ENCODE measurements at regions of chr5 and their contacts with region 1.

Region 1: GRCh38 chr5:119355685-119356611 is at the start of gene TNFAIP8:
- DNase-seq: no peak
- ATAC-seq: peak; percentile 66
- H3K4me3 ChIP-seq: peak within 1 kb of the TSS; percentile 96
- H3K27ac ChIP-seq: peak within 1 kb of the TSS; percentile 92
- H3K4me1 ChIP-seq: peaks cover 40% of the 10 kb centered on the region
- H3K27me3 ChIP-seq: no peaks in the 10 kb centered on the region
- CTCF ChIP-seq: no peak
- EP300 ChIP-seq: peak in 1 of 2 experiments; percentile 61; a peak in 2 of 4 replicates
- POLR2A ChIP-seq: peak; percentile 74
- RAD21 ChIP-seq: peak; percentile 26; the same call in 1 of the 2 replicates
- polyA plus RNA-seq, gene TNFAIP8: 217 to 324 TPM

Region 2: GRCh38 chr5:119070828-119071572 is 284.9 kb before region 1 on chr5 and contains the start of gene DMXL1:
- CTCF ChIA-PET with region 1: no interaction called
- POLR2A ChIA-PET with region 1: interaction called, 5 read pairs
- RAD21 ChIA-PET with region 1: interaction called, 4 read pairs
- SMC1A ChIA-PET with region 1: interaction called, 4 read pairs
- in situ Hi-C with region 1: no loop called
- intact Hi-C with region 1: loop called (anchors 5 kb)
- DNase-seq: peak; percentile 99
- ATAC-seq: peak; percentile 84
- H3K4me3 ChIP-seq: peak within 1 kb of the TSS; percentile 79
- H3K27ac ChIP-seq: peak within 1 kb of the TSS; percentile 91
- H3K4me1 ChIP-seq: peaks cover 5% of the 10 kb centered on the region
- H3K27me3 ChIP-seq: no peaks in the 10 kb centered on the region
- CTCF ChIP-seq: no peak
- EP300 ChIP-seq: 0 out of 4 replicates have a peak, but pooled peaks of 1 of the 2 experiments have one; percentile 8
- POLR2A ChIP-seq: peak; percentile 91
- RAD21 ChIP-seq: no peak
- polyA plus RNA-seq, gene DMXL1: 9.1 to 11.0 TPM

Region 3: GRCh38 chr5:119290161-119290569 is 65.8 kb before region 1 on chr5:
- CTCF ChIA-PET with region 1: no interaction called
- POLR2A ChIA-PET with region 1: interaction called, 6 read pairs
- RAD21 ChIA-PET with region 1: interaction called, 12 read pairs
- SMC1A ChIA-PET with region 1: interaction called, 14 read pairs
- in situ Hi-C with region 1: no loop called
- intact Hi-C with region 1: no loop called
- DNase-seq: peak; percentile 66
- ATAC-seq: peak; percentile 90
- H3K4me3 ChIP-seq: peak overlapping the region; percentile 38
- H3K27ac ChIP-seq: peak overlapping the region; percentile 84
- H3K4me1 ChIP-seq: peaks cover 46% of the 10 kb centered on the region
- H3K27me3 ChIP-seq: no peaks in the 10 kb centered on the region
- CTCF ChIP-seq: no peak
- EP300 ChIP-seq: peak; percentile 69 to 79; a peak in 2 of 4 replicates
- POLR2A ChIP-seq: no peak
- RAD21 ChIP-seq: no peak

Region 4: GRCh38 chr5:119367502-119368237 is 11.7 kb after region 1 on chr5:
- CTCF ChIA-PET with region 1: interaction called, 33 read pairs
- POLR2A ChIA-PET with region 1: interaction called, 125 read pairs
- RAD21 ChIA-PET with region 1: interaction called, 77 read pairs
- SMC1A ChIA-PET with region 1: interaction called, 1,117 read pairs
- in situ Hi-C with region 1: no loop called
- intact Hi-C with region 1: loop called (anchors 1 kb)
- DNase-seq: peak; percentile 81
- ATAC-seq: peak; percentile 72
- H3K4me3 ChIP-seq: peak overlapping the region; percentile 59
- H3K27ac ChIP-seq: peak overlapping the region; percentile 95
- H3K4me1 ChIP-seq: peaks cover 44% of the 10 kb centered on the region
- H3K27me3 ChIP-seq: no peaks in the 10 kb centered on the region
- CTCF ChIP-seq: no peak
- EP300 ChIP-seq: peak; percentile 92 to 95
- POLR2A ChIP-seq: no peak
- RAD21 ChIP-seq: 0 out of 2 replicates have a peak, but pooled peaks have one; percentile 8

Region 5: GRCh38 chr5:119389288-119390030 is 33.5 kb after region 1 on chr5:
- CTCF ChIA-PET with region 1: interaction called, 5 read pairs
- POLR2A ChIA-PET with region 1: interaction called, 10 read pairs
- RAD21 ChIA-PET with region 1: interaction called, 11 read pairs
- SMC1A ChIA-PET with region 1: interaction called, 21 read pairs
- in situ Hi-C with region 1: no loop called
- intact Hi-C with region 1: no loop called
- DNase-seq: no peak
- ATAC-seq: peak; percentile 42
- H3K4me3 ChIP-seq: peak overlapping the region; percentile 48; the same call in 1 of the 2 replicates
- H3K27ac ChIP-seq: peak overlapping the region; percentile 29
- H3K4me1 ChIP-seq: peaks cover 61% of the 10 kb centered on the region
- H3K27me3 ChIP-seq: no peaks in the 10 kb centered on the region
- CTCF ChIP-seq: no peak
- EP300 ChIP-seq: no peak
- POLR2A ChIP-seq: no peak
- RAD21 ChIP-seq: no peak

Measured in GM12878 (cell line).